ENCODE measurements at regions of chr2 and their contacts with region 1.

Region 1: DNA sequence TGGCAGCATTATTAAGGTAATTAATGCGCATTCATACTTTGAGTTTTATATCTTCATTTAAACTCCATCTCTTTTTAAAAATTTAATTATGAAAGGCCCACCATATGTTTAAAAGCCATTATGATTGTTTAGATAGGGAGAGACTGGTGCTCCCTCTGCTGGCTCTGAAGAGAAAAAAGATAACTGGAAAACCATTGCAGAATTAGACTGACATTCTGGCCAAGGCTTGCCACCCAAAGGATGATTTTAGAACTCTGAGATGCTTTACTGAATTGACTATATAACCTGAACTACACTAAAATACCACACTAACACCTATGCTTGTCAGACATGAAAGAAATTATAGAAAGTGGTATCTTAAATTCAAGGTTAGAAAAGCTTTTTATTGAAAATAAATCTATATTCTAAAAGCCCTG is 127.6 kb upstream of the SPOPL start:
- ATAC-seq: peak in 3 of 8 experiments; percentile 36 to 61 (median 46)
- H3K4me3 ChIP-seq: no peak overlapping the region
- H3K27ac ChIP-seq: no peak overlapping the region
- H3K4me1 ChIP-seq: no peaks in the 10 kb centered on the region

Region 2: GRCh38 chr2:137910641-137911040 is 463.4 kb before region 1 on chr2:
- in situ Hi-C with region 1: loop called in 1 of 9 experiments (anchors 25 kb)
- ATAC-seq: peak in 3 of 8 experiments; percentile 21 to 45 (median 32)
- H3K4me3 ChIP-seq: no peak overlapping the region
- H3K27ac ChIP-seq: no peak overlapping the region
- H3K4me1 ChIP-seq: peaks cover 0 to 3% of the 10 kb centered on the region in 2 donors

Region 3: GRCh38 chr2:137947728-137948336 is 426.2 kb before region 1 on chr2:
- in situ Hi-C with region 1: loop called in 5 of 9 experiments (anchors 25 kb)
- ATAC-seq: peak in 6 of 8 experiments; percentile 37 to 83 (median 73)
- H3K4me3 ChIP-seq: no peak overlapping the region
- H3K27ac ChIP-seq: no peak overlapping the region
- H3K4me1 ChIP-seq: peaks cover 0 to 8% of the 10 kb centered on the region in 2 donors

Region 4: DNA sequence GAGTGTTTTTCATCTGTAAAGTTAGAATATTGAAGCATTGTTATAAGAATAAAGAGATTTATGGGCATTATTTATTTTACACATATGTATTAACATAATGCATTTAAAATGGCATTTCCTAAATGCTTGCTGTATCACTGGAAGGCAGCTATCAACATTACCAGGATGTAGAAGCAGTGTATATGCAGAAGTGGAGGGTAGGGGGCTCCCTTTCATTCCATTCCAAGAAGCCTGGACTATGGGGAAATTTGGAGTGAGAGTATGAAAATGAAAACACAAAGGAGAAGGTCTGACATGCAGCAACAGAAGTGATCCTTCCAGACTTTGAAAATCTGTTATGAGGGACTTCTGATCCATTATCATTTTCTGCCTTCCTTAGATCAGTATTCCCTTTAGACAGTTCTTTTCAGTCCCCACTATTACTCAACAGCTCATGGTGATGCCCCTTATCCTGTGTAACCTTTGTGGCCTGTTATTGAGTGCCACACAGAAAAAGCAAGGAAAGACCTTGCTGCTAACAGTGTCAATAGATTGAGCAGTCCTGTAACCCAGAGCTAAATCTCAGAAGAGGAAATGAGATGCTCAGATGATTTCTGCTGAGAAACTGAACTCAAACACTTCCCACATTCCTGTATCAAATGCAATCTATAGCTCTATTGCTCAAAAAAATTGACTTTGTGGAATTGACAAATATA is 193.2 kb before region 1 on chr2:
- in situ Hi-C with region 1: loop called in 1 of 9 experiments (anchors 25 kb)
- ATAC-seq: peak in 7 of 8 experiments; percentile 35 to 89 (median 61)
- H3K4me3 ChIP-seq: no peak overlapping the region
- H3K27ac ChIP-seq: no peak overlapping the region
- H3K4me1 ChIP-seq: peaks cover 14 to 15% of the 10 kb centered on the region in 2 donors